Astrocyte of the cerebellum (primary cell): ENCODE measurements at regions of chr11 and their contacts with region 1.

Region 1: DNA sequence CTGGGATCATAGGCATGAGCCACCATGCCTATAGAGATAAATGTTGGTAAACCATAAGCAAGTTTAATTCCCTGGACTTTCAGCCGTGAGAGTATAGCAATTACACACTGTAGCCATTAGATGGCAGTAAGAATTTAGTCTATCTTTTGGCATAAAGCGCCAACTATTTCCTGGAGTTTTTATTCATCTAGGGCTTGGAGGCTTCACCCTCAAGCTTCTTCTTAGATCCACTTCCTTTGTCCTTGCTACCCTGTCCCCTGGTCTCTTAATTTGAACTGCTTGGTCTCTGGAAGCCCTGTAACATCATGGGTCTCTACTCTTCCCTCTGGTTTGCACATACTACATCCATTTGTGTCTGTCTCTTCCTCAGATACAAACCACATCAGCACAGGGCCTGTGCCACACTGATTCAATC is 38.2 kb downstream of the OR10A6 start:
- DNase-seq: peak; percentile 43
- H3K4me3 ChIP-seq: no peak overlapping the region
- CTCF ChIP-seq: peak; percentile 69

Region 2: DNA sequence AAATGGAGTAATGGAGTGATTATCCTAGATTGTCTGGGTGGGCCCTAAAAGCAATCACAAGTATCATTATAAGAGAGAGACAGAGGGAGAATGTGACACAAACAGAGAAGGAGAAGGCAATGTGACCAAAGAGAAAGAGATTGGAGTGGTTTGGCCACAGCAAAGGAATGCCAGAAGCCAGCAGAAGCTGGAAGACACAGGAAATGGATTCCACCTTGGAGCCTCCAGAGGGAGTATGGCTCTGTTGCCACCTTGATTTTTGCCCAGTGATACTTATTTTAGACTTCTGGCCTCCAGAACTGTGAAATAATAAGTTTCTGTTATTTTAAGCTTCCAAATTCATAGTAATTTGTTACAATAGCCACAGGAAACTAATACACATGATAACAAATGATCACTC is 59.3 kb before region 1 on chr11:
- in situ Hi-C with region 1: no loop called
- DNase-seq: no peak
- H3K4me3 ChIP-seq: no peak overlapping the region
- CTCF ChIP-seq: no peak

Region 3: DNA sequence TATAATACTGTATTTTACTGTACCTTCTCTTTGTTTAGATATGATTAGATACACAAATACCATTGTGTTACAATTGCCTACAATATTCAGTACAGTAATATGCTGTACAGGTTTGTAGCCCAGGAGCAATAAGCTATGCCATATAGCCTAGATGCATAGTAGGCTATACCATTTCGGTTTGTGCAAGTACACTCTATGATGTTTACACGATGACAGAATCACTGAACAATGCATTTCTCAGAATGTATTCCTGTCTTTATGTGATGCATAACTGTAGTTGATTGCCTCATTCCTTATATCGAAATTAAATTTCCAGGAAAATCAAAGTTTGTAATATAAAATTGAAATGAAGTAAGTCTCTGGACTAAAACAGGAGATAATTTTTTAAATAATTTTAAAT is 46.8 kb before region 1 on chr11:
- in situ Hi-C with region 1: no loop called
- DNase-seq: no peak
- H3K4me3 ChIP-seq: no peak overlapping the region
- CTCF ChIP-seq: no peak

Region 4: DNA sequence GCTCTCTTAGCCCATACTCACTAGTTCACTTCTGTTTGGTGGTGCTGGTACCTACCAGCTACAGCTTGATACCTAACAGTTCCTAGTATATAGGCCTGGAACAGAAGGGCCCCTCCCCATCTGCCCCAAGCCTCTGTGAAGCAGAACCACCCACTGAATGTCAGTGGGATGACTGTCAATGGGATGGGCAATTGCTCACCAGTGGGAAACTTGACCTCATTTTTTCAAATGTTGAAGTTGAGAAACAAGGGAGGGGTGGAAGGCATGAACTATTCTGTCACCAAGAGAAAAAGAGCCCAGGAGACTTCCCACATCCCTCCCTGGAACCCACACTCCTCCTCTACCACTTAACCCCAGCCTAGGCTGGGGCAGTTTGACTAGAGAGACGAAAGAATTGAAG is 72.5 kb after region 1 on chr11 and contains the start of gene NLRP10:
- in situ Hi-C with region 1: loop called (anchors 5 kb)
- DNase-seq: no peak
- H3K4me3 ChIP-seq: no peak within 1 kb of the TSS
- CTCF ChIP-seq: no peak